Activated CD8-positive, alpha-beta T cell treated with anti-CD3 and anti-CD28 coated beads for 36 hours (primary cell): ENCODE measurements at regions of chr1 and their contacts with region 1.

Region 1: DNA sequence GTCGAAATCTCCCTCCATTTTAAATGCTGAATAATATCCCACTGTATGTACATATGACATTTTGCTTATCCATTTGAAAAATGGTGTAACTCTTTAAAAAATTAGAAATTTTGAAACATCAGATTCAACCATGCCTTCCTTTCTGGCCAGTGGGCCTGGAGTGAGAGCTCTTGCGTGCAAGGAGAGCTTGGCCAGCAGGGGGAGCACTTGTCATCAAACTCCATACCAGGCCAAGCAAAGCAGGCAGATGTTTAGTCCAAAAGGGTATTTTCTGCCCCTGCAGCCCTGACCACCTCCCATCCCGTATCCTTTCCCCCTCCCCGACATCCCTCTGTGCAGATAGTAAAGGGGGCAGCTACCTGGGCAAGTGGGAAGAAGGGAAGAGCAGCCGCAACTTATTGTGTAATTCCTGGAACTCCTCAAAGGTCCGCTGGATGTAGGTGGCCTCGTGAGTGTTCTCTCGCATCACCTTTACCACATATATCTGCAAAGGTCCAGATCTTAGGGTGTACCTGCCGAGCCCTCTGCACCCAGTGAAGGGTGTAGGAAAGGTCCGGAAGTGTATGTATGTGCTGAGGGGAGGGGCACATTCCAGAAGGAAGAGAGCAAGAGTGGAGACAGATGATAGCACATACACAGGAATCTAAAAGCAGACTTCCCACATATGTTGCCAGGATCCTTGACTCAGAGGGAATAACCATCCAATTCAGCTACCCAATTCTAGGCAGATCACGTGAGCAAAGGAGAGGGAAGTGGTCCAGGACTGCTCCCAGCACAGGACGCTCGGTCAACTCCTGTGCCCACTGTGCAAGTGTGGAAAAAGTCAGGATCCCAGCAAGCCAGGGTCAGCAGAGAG is 19.9 kb upstream of the PPP1R15B start:
- DNase-seq: peak; percentile 91
- ATAC-seq: peak; percentile 89
- H3K4me3 Mint-ChIP-seq: no peak overlapping the region
- H3K27ac Mint-ChIP-seq: no peak overlapping the region
- H3K4me1 Mint-ChIP-seq: peaks cover 3% of the 10 kb centered on the region
- H3K27me3 Mint-ChIP-seq: no peaks in the 10 kb centered on the region
- CTCF ChIP-seq: peak; percentile 91

Region 2: GRCh38 chr1:204288021-204288588 is 143.4 kb before region 1 on chr1:
- CTCF ChIA-PET with region 1: no interaction called
- POLR2A ChIA-PET with region 1: no interaction called
- intact Hi-C with region 1: no loop called
- DNase-seq: no peak
- ATAC-seq: no peak
- H3K4me3 Mint-ChIP-seq: no peak overlapping the region
- H3K27ac Mint-ChIP-seq: no peak overlapping the region
- H3K4me1 Mint-ChIP-seq: peaks cover 22% of the 10 kb centered on the region
- H3K27me3 Mint-ChIP-seq: peaks cover 2% of the 10 kb centered on the region
- CTCF ChIP-seq: no peak

Region 3: DNA sequence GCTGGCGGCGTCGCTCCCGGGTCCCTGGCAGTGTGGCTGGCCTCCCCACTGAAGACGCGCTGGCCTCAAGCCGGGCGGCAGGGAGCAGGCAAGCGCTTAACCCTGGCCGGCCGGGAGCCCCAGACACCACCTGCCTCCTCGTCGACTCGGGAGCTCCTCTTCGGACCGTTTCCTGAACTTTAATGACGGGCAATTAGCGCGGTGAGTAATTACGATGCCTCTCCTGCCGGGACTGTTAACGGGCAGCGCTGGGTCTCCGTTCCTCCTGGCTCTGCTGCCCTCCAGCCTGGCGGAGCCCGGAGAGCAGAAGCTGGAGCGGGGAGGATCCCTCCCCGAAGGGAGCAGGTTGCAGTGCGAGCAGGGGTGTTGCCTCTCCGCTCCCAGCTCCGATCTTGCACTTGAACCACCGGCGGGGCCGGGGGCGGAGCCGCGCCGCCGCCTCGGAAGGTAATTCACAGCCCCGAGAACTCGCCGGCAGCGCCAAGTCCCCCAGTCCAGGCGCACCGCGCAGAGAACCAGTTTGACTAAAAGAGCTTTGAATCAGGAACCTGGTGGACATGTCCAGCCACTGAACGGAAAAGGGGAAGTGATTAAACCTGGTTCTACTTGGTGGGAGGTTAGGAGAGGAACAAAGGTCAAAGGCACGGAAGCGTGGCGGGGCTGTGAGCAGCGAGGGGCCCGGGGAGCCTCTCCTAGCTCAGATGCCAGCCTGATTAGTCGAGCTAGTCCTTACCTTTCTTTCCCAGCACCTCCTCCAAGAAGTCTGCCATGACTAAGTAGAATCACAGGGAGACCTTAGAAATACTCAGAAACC is 53.5 kb before region 1 on chr1:
- CTCF ChIA-PET with region 1: interaction called, 10 read pairs
- POLR2A ChIA-PET with region 1: no interaction called
- intact Hi-C with region 1: no loop called
- DNase-seq: peak; percentile 67
- ATAC-seq: peak; percentile 73
- H3K4me3 Mint-ChIP-seq: peak overlapping the region; percentile 82
- H3K27ac Mint-ChIP-seq: peak overlapping the region; percentile 67
- H3K4me1 Mint-ChIP-seq: peaks cover 14% of the 10 kb centered on the region
- H3K27me3 Mint-ChIP-seq: peaks cover 14% of the 10 kb centered on the region
- CTCF ChIP-seq: no peak

Region 4: GRCh38 chr1:204417231-204417997 is 14.1 kb before region 1 on chr1:
- CTCF ChIA-PET with region 1: interaction called, 31 read pairs
- POLR2A ChIA-PET with region 1: interaction called, 3 read pairs
- intact Hi-C with region 1: no loop called
- DNase-seq: peak; percentile 58
- ATAC-seq: peak; percentile 73
- H3K4me3 Mint-ChIP-seq: no peak overlapping the region
- H3K27ac Mint-ChIP-seq: peak overlapping the region; percentile 41
- H3K4me1 Mint-ChIP-seq: peaks cover 45% of the 10 kb centered on the region
- H3K27me3 Mint-ChIP-seq: no peaks in the 10 kb centered on the region
- CTCF ChIP-seq: no peak

Region 5: GRCh38 chr1:204480515-204480914 is 49.0 kb after region 1 on chr1:
- CTCF ChIA-PET with region 1: interaction called, 29 read pairs
- POLR2A ChIA-PET with region 1: no interaction called
- intact Hi-C with region 1: no loop called
- DNase-seq: peak; percentile 40
- ATAC-seq: peak; percentile 69
- H3K4me3 Mint-ChIP-seq: no peak overlapping the region
- H3K27ac Mint-ChIP-seq: no peak overlapping the region
- H3K4me1 Mint-ChIP-seq: peaks cover 55% of the 10 kb centered on the region
- H3K27me3 Mint-ChIP-seq: no peaks in the 10 kb centered on the region
- CTCF ChIP-seq: no peak

Region 6: DNA sequence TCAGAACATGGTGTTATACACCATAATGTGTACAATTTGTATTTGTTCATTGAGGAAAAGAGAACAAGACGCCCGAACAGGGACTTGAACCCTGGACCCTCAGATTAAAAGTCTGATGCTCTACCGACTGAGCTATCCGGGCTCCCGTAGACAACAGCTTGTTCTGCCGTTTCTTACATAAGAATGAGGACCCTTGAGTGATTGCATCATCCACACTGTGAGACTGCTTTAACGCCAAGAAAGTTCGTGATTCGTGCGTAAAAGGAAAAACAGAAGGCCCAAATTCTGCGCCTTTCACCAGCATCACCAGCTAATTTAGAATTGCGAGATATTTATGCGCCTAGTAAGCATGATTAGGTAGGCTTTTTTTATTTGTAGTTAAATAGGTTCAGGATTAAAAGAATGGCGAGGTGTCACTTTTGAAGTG is 75.4 kb after region 1 on chr1:
- CTCF ChIA-PET with region 1: interaction called, 1,122 read pairs
- POLR2A ChIA-PET with region 1: interaction called, 5 read pairs
- intact Hi-C with region 1: loop called (anchors 5 kb)
- DNase-seq: peak; percentile 93
- ATAC-seq: peak; percentile 75
- H3K4me3 Mint-ChIP-seq: peak overlapping the region; percentile 89
- H3K27ac Mint-ChIP-seq: peak overlapping the region; percentile 99
- H3K4me1 Mint-ChIP-seq: peaks cover 26% of the 10 kb centered on the region
- H3K27me3 Mint-ChIP-seq: peaks cover 3% of the 10 kb centered on the region
- CTCF ChIP-seq: no peak

Region 7: DNA sequence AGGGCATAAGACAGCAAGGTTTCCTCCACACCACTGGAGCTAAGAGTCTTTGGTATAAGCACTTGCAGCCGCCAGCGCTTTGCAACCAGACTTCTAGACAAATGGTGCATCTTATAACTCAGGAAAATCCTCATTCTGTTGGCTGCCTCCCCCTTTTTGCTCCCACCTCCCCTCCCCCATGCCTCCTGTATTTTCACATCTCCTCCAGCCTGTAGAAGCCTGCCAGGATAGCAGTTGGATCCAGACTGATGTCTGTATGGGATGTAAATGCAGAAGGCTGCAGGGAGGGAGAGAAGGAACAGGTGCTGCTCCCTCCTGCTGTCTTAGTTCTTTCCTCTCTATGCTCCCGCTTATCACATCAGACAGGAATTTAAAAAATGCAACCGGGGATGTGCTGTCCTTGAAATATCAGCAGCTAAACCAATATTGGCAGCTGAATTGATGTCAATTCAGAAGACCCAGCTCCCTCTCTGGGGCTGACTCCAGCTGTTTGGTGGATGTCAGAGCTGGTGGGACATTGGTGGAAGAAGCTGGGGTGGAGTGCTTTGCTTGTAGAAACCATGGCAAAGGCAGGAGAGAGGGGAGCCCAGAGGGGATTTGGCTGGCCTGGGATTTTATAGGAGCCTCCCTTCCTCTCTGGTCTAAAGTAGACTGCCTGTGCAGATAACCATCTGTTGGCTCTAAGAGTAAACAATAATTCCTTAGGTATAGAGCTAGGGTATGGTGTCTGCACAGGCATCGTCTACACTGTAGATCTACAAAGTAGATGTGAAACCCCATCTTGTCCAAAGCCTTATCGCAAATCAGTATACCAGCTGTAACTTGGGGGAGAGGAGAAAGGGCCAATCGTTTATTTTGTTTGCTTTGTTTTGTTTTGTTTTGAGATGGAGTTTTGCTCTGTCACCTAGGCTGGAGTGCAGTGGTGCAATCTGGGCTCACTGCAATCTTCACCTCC is 492.8 kb after region 1 on chr1:
- CTCF ChIA-PET with region 1: no interaction called
- POLR2A ChIA-PET with region 1: no interaction called
- intact Hi-C with region 1: no loop called
- DNase-seq: no peak
- ATAC-seq: no peak
- H3K4me3 Mint-ChIP-seq: no peak overlapping the region
- H3K27ac Mint-ChIP-seq: no peak overlapping the region
- H3K4me1 Mint-ChIP-seq: no peaks in the 10 kb centered on the region
- H3K27me3 Mint-ChIP-seq: no peaks in the 10 kb centered on the region
- CTCF ChIP-seq: no peak

Region 8: GRCh38 chr1:205061665-205062069 is 630.1 kb after region 1 on chr1:
- CTCF ChIA-PET with region 1: no interaction called
- POLR2A ChIA-PET with region 1: no interaction called
- intact Hi-C with region 1: no loop called
- DNase-seq: peak; percentile 83
- ATAC-seq: peak; percentile 86
- H3K4me3 Mint-ChIP-seq: no peak overlapping the region
- H3K27ac Mint-ChIP-seq: no peak overlapping the region
- H3K4me1 Mint-ChIP-seq: no peaks in the 10 kb centered on the region
- H3K27me3 Mint-ChIP-seq: no peaks in the 10 kb centered on the region
- CTCF ChIP-seq: peak; percentile 89